Ascending aorta (tissue), 2 donors: ENCODE measurements at regions of chrX and their contacts with region 1.

Region 1: GRCh38 chrX:2690856-2691542 is at the start of gene CD99:
- DNase-seq: peak; percentile 39 to 96
- H3K4me3 ChIP-seq: peak within 1 kb of the TSS; percentile 86 to 94
- H3K27ac ChIP-seq: peak within 1 kb of the TSS; percentile 76 to 79
- H3K4me1 ChIP-seq: peaks cover 0 to 22% of the 10 kb centered on the region in 2 donors
- H3K27me3 ChIP-seq: no peaks in the 10 kb centered on the region
- CTCF ChIP-seq: no peak
- total RNA-seq, gene CD99: 262 TPM

Region 2: GRCh38 chrX:2500267-2501075 is 190.5 kb before region 1 on chrX and contains the starts of genes DHRSX and ZBED1:
- intact Hi-C with region 1: loop called (anchors 10 kb)
- DNase-seq: no peak
- H3K4me3 ChIP-seq: peak within 1 kb of the TSS; percentile 84 to 99
- H3K27ac ChIP-seq: peak within 1 kb of the TSS; percentile 77 to 91
- H3K4me1 ChIP-seq: peaks cover 7 to 24% of the 10 kb centered on the region in 2 donors
- H3K27me3 ChIP-seq: no peaks in the 10 kb centered on the region
- CTCF ChIP-seq: no peak
- total RNA-seq, gene DHRSX: 13.4 TPM
- total RNA-seq, gene ZBED1: 34.6 TPM

Region 3: GRCh38 chrX:2677764-2678163 is 13.2 kb before region 1 on chrX:
- intact Hi-C with region 1: loop called (anchors 1 kb)
- DNase-seq: peak; percentile 51 to 89
- H3K4me3 ChIP-seq: no peak overlapping the region
- H3K27ac ChIP-seq: no peak overlapping the region
- H3K4me1 ChIP-seq: peaks cover 0 to 3% of the 10 kb centered on the region in 2 donors
- H3K27me3 ChIP-seq: no peaks in the 10 kb centered on the region
- CTCF ChIP-seq: no peak

Region 4: DNA sequence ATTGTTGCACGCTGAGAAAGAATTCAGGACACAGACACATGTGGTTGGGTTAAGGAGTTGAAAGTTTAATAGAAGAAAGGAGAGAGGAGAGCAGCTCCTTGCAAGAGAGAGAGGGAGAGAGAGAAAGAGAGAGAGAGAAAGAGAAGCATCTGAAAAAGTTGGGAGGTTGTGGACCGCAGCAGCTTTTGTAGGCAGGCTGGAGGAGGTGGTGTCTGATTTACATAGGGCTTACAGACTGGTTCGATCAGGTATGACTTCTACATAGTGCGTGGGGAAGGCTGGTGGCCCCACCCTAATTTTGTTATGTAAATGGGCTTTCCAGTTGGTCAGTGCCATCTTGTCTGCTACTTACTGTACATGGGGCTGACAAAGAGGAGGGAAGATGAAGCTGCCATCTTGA is 110.2 kb after region 1 on chrX:
- intact Hi-C with region 1: loop called (anchors 10 kb)
- DNase-seq: peak in 1 of 2 donors; percentile 24
- H3K4me3 ChIP-seq: no peak overlapping the region
- H3K27ac ChIP-seq: no peak overlapping the region
- H3K4me1 ChIP-seq: peaks cover 0 to 6% of the 10 kb centered on the region in 2 donors
- H3K27me3 ChIP-seq: no peaks in the 10 kb centered on the region
- CTCF ChIP-seq: no peak

Region 5: DNA sequence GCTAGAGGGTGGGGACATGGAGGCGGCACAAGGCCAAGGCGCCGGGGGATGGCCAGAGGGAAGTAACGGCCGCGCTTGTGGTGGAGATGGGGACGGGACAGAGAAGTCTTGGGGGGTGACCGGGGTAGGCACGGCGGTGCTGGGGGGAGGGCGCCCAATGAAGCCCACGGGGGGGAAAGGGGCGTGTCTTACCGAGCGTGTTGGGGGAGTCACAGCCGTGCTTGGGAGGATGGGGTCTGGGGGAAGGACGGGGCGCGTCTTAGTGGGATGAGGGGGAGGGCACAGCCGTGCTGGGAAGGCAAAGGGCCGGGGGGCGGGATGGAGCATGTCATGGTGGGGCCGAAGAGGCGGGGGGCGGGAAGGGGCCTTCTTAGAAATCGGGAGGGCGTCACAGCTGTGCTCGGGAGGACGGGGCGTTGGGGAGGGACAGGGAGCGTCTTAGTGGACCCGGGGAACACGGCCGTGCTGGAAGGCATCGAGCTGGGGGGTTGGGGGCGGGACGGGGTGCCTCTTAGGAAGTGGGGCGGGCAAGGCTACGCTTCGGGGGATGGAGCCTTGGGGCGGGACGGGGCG is 237.3 kb after region 1 on chrX:
- intact Hi-C with region 1: loop called (anchors 5 kb)
- DNase-seq: peak in 1 of 2 donors; percentile 24
- H3K4me3 ChIP-seq: peak overlapping the region; percentile 83 to 92
- H3K27ac ChIP-seq: peak overlapping the region; percentile 97 to 99
- H3K4me1 ChIP-seq: no peaks in the 10 kb centered on the region
- H3K27me3 ChIP-seq: no peaks in the 10 kb centered on the region
- CTCF ChIP-seq: no peak